ENCODE measurements at regions of chr4 and their contacts with region 1.

Region 1: DNA sequence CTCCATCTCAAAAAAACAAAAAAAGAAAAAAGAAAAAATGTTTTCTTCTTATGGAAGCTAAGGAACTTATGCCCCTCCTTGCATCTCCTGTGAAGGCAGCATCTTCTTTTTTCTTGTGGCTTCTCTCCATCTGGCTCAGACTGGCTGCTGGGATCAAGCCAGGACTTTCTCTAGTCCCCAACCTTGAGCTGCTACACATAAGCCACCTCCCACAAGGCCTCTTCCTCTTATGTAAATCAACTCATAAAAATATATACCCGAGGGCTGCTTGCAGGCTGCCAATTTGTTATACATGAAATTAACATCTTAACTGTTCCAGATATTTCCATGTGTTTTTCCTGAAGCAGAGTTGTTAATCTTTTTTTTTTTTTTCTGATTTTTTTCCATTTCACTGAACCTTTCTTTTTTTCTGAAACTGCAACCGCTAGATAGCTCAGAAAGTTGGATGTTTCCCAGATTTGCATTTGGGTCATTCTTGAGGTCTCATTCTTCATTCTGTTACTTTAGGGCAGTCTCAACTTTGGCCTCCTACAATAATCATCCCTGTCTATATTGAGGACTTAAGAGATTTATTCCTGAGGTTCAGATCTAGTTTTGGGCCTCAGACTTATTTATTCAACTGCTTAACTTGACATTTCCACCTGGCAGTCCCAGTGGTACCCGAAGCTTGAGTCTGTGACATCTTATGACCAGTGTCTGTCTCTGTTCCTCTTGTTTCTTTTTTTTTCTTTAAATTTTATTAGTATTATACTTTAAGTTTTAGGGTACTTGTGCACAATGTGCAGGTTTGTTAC is 10.3 kb downstream of the SNX25 start:
- DNase-seq: no peak
- ATAC-seq: peak; percentile 51

Region 2: GRCh38 chr4:185276036-185276435 is 56.3 kb after region 1 on chr4:
- intact Hi-C with region 1: loop called (anchors 5 kb)
- DNase-seq: no peak
- ATAC-seq: no peak

Region 3: GRCh38 chr4:185384930-185385331 is 165.2 kb after region 1 on chr4:
- intact Hi-C with region 1: no loop called
- DNase-seq: no peak
- ATAC-seq: peak; percentile 26